Psoas muscle (tissue), 8 donors: ENCODE measurements at regions of chr2 and their contacts with region 1.

Region 1: DNA sequence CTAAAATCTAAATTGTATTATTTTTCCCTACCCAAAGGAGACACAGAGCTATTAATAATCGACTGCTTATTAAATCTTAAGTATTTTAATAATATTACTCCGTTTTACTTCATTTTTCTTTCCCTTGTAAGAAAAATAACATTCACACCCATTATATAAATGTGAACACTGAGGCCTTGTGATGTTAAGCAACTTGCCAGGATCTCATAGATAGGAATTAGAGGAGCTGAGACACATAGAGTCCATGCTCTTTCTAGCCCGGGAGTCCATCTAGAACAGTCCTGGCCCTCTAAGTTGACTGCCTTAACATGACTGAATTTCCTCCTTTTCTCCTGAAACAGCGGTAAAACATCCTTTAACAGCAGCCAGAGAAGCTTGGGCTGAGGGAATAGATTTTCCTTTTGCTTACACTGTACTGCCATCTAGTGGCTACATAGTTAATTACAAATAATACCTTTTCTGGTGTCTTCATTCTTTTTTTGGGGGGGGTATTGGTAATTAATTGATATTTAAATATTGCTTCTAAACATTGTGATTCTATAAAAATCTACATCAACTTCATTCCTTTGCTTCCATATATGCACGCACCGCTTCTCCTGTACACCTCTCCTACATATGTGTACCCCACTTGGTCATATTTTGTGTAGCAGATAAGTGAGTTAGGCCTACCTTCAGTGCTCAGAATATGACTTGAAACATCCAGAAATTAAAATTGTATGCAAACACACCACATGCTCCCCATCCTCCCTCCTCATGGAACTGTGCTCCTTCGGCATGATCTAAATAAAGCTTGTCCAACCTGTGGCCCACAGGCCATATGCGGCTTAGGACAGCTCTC is 125.8 kb upstream of the HNMT start:
- DNase-seq: no peak
- ATAC-seq: peak in 2 of 4 donors; percentile 46 to 64
- H3K4me3 ChIP-seq: no peak overlapping the region
- H3K27ac ChIP-seq: no peak overlapping the region
- H3K4me1 ChIP-seq: no peaks in the 10 kb centered on the region
- H3K27me3 ChIP-seq: no peaks in the 10 kb centered on the region
- CTCF ChIP-seq: peak; percentile 61

Region 2: GRCh38 chr2:136423516-136423996 is 1414.9 kb before region 1 on chr2:
- intact Hi-C with region 1: loop called (anchors 5 to 10 kb)
- DNase-seq: peak; percentile 62 to 76
- ATAC-seq: peak; percentile 67 to 89 (median 84)
- H3K4me3 ChIP-seq: peak overlapping the region; percentile 52
- H3K27ac ChIP-seq: no peak overlapping the region
- H3K4me1 ChIP-seq: no peaks in the 10 kb centered on the region
- H3K27me3 ChIP-seq: peaks cover 0 to 5% (median 2%) of the 10 kb centered on the region in 3 donors
- CTCF ChIP-seq: peak; percentile 72

Region 3: GRCh38 chr2:137467246-137467862 is 371.1 kb before region 1 on chr2:
- intact Hi-C with region 1: loop called in 1 of 2 experiments (anchors 10 kb)
- DNase-seq: no peak
- ATAC-seq: no peak
- H3K4me3 ChIP-seq: no peak overlapping the region
- H3K27ac ChIP-seq: no peak overlapping the region
- H3K4me1 ChIP-seq: no peaks in the 10 kb centered on the region
- H3K27me3 ChIP-seq: no peaks in the 10 kb centered on the region
- CTCF ChIP-seq: peak; percentile 29